ENCODE measurements at regions of chr9 and their contacts with region 1.

Region 1: GRCh38 chr9:97752274-97752673 is 55.1 kb upstream of the XPA start:
- DNase-seq: no peak
- H3K4me3 ChIP-seq: no peak overlapping the region
- H3K27ac ChIP-seq: no peak overlapping the region
- H3K4me1 ChIP-seq: no peaks in the 10 kb centered on the region
- H3K27me3 ChIP-seq: peaks cover 18% of the 10 kb centered on the region in 2 experiments
- CTCF ChIP-seq: no peak
- POLR2A ChIP-seq: no peak

Region 2: DNA sequence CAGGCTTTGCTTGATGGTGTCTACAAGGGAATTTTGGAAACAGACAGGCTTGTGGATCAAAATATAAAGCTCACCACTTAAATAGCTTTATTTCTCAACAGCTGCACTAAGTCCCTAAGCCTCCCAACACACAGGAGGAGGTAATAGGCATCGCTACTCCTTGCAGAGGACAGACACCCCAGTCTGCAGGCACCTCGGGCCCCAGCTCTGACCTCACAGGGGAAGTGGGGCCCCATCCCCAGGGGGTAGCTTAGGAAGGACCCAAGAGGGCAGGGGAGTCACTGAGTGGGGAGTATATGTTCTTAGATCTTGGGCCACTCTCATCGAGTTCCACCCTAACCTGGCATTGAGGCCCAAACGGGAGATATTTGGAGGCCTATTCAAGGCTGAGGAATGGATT is 11.6 kb after region 1 on chr9:
- CTCF ChIA-PET with region 1: interaction called, 12 read pairs
- POLR2A ChIA-PET with region 1: no interaction called
- dilution Hi-C with region 1: no loop called
- intact Hi-C with region 1: no loop called
- DNase-seq: no peak
- H3K4me3 ChIP-seq: no peak overlapping the region
- H3K27ac ChIP-seq: no peak overlapping the region
- H3K4me1 ChIP-seq: no peaks in the 10 kb centered on the region
- H3K27me3 ChIP-seq: peaks cover 0 to 2% of the 10 kb centered on the region in 2 experiments
- CTCF ChIP-seq: no peak
- POLR2A ChIP-seq: no peak

Measured in endothelial cell of umbilical vein (primary cell).